HepG2 (cell line): ENCODE measurements at regions of chr1 and their contacts with region 1.

Region 1: GRCh38 chr1:113835642-113836307 is 23.5 kb upstream of the RSBN1 start:
- DNase-seq: peak; percentile 42
- ATAC-seq: no peak
- H3K4me3 ChIP-seq: no peak overlapping the region
- H3K27ac ChIP-seq: no peak overlapping the region
- H3K4me1 ChIP-seq: no peaks in the 10 kb centered on the region
- H3K27me3 ChIP-seq: 0 out of 5 replicates have a peak, but pooled peaks cover 0 to 3% of the 10 kb centered on the region in 2 experiments
- CTCF ChIP-seq: peak; percentile 39
- EP300 ChIP-seq: no peak
- POLR2A ChIP-seq: no peak
- RAD21 ChIP-seq: no peak

Region 2: GRCh38 chr1:113871597-113872113 is 35.9 kb after region 1 on chr1 and contains the start of gene PTPN22:
- CTCF ChIA-PET with region 1: no interaction called
- POLR2A ChIA-PET with region 1: no interaction called
- in situ Hi-C with region 1: no loop called
- intact Hi-C with region 1: loop called (anchors 5 kb)
- DNase-seq: no peak
- ATAC-seq: no peak
- H3K4me3 ChIP-seq: no peak within 1 kb of the TSS
- H3K27ac ChIP-seq: no peak within 1 kb of the TSS
- H3K4me1 ChIP-seq: no peaks in the 10 kb centered on the region
- H3K27me3 ChIP-seq: peaks cover 0 to 2% of the 10 kb centered on the region in 2 experiments; a peak in 1 of 5 replicates
- CTCF ChIP-seq: no peak
- EP300 ChIP-seq: no peak
- POLR2A ChIP-seq: no peak
- RAD21 ChIP-seq: no peak
- total RNA-seq, gene PTPN22: not detected in 2 replicates

Region 3: GRCh38 chr1:113949007-113949406 is 113.2 kb after region 1 on chr1:
- CTCF ChIA-PET with region 1: no interaction called
- POLR2A ChIA-PET with region 1: interaction called, 3 read pairs
- in situ Hi-C with region 1: no loop called
- intact Hi-C with region 1: loop called (anchors 5 kb)
- DNase-seq: no peak
- ATAC-seq: no peak; the same call in 2 of the 3 replicates
- H3K4me3 ChIP-seq: no peak overlapping the region
- H3K27ac ChIP-seq: peak overlapping the region; percentile 62
- H3K4me1 ChIP-seq: peaks cover 58% of the 10 kb centered on the region
- H3K27me3 ChIP-seq: no peaks in the 10 kb centered on the region
- CTCF ChIP-seq: peak; percentile 7; the same call in 1 of the 2 replicates
- EP300 ChIP-seq: no peak
- POLR2A ChIP-seq: no peak
- RAD21 ChIP-seq: no peak

Region 4: DNA sequence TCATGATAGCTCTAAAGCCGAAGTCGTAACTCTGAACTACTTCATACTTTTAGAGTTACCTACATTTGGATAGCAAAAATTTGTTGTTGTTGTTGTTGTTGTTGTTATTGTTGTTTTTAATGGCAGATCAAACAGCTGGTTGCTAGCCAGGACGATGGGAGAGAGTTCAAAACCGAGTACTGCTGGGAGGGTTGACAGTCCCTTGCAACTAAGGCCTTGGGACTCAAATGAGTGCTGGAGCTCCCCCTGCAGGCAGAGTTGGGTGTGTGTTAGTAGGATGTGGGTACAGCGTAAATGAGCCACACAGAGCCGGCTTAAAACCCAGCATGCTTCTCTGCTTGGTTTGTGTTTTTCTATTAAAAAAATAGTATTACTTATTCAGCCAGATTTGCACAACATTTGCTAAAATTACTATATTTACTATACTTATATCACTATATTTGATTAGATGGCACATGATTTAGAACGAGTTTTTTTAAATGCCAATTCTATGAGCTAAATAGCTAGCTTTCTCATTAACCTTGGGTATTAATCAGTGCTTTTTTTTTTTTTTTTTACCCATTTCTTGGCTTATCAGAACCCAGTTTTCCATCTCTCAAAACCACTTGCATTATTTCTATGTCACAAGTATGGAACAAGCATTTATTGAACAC is 447.1 kb after region 1 on chr1:
- CTCF ChIA-PET with region 1: interaction called, 3 read pairs
- POLR2A ChIA-PET with region 1: no interaction called
- in situ Hi-C with region 1: loop called (anchors 25 kb)
- intact Hi-C with region 1: loop called (anchors 10 kb)
- DNase-seq: peak; percentile 80
- ATAC-seq: peak; percentile 99
- H3K4me3 ChIP-seq: no peak overlapping the region
- H3K27ac ChIP-seq: no peak overlapping the region
- H3K4me1 ChIP-seq: no peaks in the 10 kb centered on the region
- H3K27me3 ChIP-seq: peaks cover 0 to 4% of the 10 kb centered on the region in 2 experiments; a peak in 1 of 5 replicates
- CTCF ChIP-seq: peak; percentile 86
- EP300 ChIP-seq: no peak
- POLR2A ChIP-seq: no peak
- RAD21 ChIP-seq: peak; percentile 59; the same call in 1 of the 2 replicates